Mucosa of descending colon (tissue), 3 donors: ENCODE measurements at regions of chr2 and their contacts with region 1.

Region 1: GRCh38 chr2:70919672-70920366 is 15.9 kb upstream of the ATP6V1B1 start:
- DNase-seq: peak in 2 of 3 donors; percentile 90 to 91
- ATAC-seq: peak; percentile 96
- H3K4me3 ChIP-seq: no peak overlapping the region
- H3K4me1 ChIP-seq: no peaks in the 10 kb centered on the region
- CTCF ChIP-seq: peak; percentile 85

Region 2: GRCh38 chr2:70871398-70872211 is 48.2 kb before region 1 on chr2:
- intact Hi-C with region 1: loop called (anchors 2 to 10 kb)
- DNase-seq: peak; percentile 74 to 91 (median 87)
- ATAC-seq: peak; percentile 98
- H3K4me3 ChIP-seq: no peak overlapping the region
- H3K4me1 ChIP-seq: peaks cover 8% of the 10 kb centered on the region
- CTCF ChIP-seq: peak; percentile 88